ENCODE measurements at regions of chr7 and their contacts with region 1.

Region 1: GRCh38 chr7:33459340-33459751 is 330.0 kb downstream of the BBS9 start:
- DNase-seq: peak; percentile 3
- H3K4me3 ChIP-seq: no peak overlapping the region
- H3K27ac ChIP-seq: no peak overlapping the region
- H3K27me3 ChIP-seq: no peaks in the 10 kb centered on the region
- CTCF ChIP-seq: peak; percentile 57

Region 2: DNA sequence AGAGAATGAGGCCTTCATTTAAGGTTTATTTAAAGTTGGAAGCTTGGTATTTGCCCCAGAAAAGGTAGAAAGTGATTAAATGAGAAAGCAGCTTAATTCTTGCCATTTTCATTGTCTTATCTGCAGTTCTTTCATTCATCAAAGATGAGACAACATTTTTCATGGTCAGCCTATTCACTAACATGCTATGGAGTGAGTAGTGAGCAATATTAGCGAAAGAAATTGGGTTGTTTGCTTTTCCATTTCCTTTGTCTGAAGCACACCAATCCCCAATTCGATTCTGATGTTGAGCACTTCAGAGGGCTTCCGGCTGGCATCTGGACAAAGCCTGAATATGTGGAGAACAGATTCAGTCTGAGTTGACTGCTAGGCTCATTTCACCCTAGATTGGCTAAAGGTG is 12.8 kb before region 1 on chr7:
- CTCF ChIA-PET with region 1: interaction called, 11 read pairs
- POLR2A ChIA-PET with region 1: no interaction called
- DNase-seq: no peak
- H3K4me3 ChIP-seq: no peak overlapping the region
- H3K27ac ChIP-seq: no peak overlapping the region
- H3K27me3 ChIP-seq: no peaks in the 10 kb centered on the region
- CTCF ChIP-seq: no peak